PC-3 (cell line): ENCODE measurements at regions of chr3 and their contacts with region 1.

Region 1: DNA sequence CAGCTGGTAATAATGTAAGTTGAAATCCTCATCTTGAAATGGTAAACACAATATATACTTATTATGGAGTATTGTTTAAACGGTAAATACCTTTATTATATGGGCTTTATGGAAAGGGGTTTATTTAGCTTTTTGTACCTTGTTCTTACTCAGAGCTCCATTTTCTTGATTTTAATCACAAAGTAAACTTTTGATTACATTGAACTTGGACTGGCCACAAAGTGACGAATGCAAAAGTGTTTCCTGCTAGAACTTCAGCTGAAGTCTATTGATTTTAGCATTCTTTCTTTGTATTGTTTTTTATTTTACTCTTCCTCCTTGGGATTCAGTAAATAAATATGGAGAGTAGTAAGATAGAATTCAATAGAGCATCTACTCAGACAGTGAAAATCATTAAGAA is 19.8 kb upstream of the AADAC start:
- DNase-seq: peak; percentile 80
- ATAC-seq: peak; percentile 75
- H3K4me3 ChIP-seq: no peak overlapping the region
- H3K27ac ChIP-seq: peak overlapping the region; percentile 73
- H3K4me1 ChIP-seq: peaks cover 50% of the 10 kb centered on the region
- H3K27me3 ChIP-seq: no peaks in the 10 kb centered on the region
- CTCF ChIP-seq: no peak

Region 2: DNA sequence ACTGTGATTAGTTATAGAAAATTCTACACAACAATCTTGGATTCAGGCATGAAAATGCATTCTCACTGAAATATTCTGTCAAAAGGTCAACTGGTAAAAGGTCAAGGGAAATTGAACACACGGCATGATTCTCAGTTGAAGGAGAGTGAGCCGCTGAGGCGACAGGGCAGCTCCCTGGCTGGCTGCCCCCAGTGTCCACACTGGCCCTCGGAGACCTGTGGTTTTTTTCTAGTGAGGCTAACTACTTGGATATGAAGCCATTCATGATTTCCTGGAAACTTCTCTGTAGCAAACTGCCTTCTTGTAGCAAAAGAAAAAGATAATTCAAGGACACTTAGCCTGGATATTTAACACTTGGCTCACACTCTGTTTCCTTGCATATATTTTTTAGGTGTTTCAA is 23.1 kb before region 1 on chr3:
- CTCF ChIA-PET with region 1: no interaction called
- POLR2A ChIA-PET with region 1: no interaction called
- intact Hi-C with region 1: loop called (anchors 1 kb)
- DNase-seq: peak; percentile 21
- ATAC-seq: 0 out of 2 replicates have a peak, but pooled peaks have one; percentile 5
- H3K4me3 ChIP-seq: no peak overlapping the region
- H3K27ac ChIP-seq: peak overlapping the region; percentile 88
- H3K4me1 ChIP-seq: peaks cover 38% of the 10 kb centered on the region
- H3K27me3 ChIP-seq: no peaks in the 10 kb centered on the region
- CTCF ChIP-seq: no peak